Activated CD4-positive, alpha-beta T cell treated with anti-CD3 and anti-CD28 coated beads for 36 hours (primary cell): ENCODE measurements at regions of chr1 and their contacts with region 1.

Region 1: DNA sequence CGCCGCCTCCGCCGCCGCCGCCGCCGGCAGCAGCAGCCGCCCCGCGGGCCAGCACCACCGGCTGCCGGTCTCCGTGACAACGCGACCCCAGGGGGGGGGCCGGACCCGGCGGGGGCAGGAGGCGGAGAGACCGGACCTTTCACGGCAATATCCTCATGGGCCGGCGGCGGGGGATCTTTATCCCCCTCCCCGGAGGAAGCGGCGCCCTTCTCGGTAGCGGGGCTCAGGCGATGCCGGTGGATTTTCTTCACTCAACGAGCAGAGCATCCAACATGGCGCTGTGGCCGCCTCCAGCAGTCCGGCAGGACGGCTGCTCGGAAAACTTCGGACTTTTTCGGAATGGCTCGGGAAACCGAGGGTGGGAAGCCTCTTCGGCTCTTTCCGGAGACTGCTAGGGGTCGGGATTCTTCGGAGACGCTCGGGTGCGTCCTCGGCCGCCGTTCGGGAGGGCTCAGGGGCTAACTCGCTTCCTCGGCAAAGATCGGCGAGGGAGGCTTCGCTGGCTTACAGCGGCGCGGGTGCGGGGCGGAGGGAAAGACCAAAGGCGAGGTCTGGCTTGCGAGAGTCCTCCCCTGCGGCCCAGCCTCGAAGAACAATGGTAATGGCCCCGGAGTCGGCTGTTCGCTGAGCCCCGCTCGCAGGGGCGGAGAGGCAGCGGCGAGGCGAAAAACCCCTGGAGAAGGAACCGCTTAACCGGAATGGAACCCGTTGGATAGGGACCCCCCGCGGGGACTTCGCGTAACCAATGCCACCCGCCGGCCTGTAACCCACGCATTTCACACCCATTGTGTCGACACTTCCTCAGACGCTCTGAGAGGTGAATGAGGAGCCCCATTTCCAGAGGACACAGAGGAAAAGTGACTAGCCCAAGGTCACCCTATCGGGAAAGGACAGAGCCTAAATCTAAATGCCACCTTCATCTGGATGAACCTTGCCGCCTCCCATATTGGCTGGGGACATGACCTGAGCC is at the start of gene EIF4G3:
- DNase-seq: peak; percentile 100
- ATAC-seq: peak; percentile 99
- H3K4me3 Mint-ChIP-seq: peak within 1 kb of the TSS; percentile 81
- H3K27ac Mint-ChIP-seq: peak within 1 kb of the TSS; percentile 92
- H3K4me1 Mint-ChIP-seq: peaks cover 25% of the 10 kb centered on the region
- H3K27me3 Mint-ChIP-seq: no peaks in the 10 kb centered on the region
- total RNA-seq, gene EIF4G3: 47.0 to 55.0 TPM

Region 2: GRCh38 chr1:20507564-20508410 is 669.1 kb before region 1 on chr1 and contains the start of gene MUL1:
- CTCF ChIA-PET with region 1: no interaction called
- POLR2A ChIA-PET with region 1: no interaction called
- intact Hi-C with region 1: loop called in 1 of 2 experiments (anchors 2 kb)
- DNase-seq: peak; percentile 96
- ATAC-seq: peak; percentile 96
- H3K4me3 Mint-ChIP-seq: peak within 1 kb of the TSS; percentile 79
- H3K27ac Mint-ChIP-seq: peak within 1 kb of the TSS; percentile 65
- H3K4me1 Mint-ChIP-seq: peaks cover 17% of the 10 kb centered on the region
- H3K27me3 Mint-ChIP-seq: peaks cover 2% of the 10 kb centered on the region
- total RNA-seq, gene MUL1: 9.0 to 13.1 TPM

Region 3: DNA sequence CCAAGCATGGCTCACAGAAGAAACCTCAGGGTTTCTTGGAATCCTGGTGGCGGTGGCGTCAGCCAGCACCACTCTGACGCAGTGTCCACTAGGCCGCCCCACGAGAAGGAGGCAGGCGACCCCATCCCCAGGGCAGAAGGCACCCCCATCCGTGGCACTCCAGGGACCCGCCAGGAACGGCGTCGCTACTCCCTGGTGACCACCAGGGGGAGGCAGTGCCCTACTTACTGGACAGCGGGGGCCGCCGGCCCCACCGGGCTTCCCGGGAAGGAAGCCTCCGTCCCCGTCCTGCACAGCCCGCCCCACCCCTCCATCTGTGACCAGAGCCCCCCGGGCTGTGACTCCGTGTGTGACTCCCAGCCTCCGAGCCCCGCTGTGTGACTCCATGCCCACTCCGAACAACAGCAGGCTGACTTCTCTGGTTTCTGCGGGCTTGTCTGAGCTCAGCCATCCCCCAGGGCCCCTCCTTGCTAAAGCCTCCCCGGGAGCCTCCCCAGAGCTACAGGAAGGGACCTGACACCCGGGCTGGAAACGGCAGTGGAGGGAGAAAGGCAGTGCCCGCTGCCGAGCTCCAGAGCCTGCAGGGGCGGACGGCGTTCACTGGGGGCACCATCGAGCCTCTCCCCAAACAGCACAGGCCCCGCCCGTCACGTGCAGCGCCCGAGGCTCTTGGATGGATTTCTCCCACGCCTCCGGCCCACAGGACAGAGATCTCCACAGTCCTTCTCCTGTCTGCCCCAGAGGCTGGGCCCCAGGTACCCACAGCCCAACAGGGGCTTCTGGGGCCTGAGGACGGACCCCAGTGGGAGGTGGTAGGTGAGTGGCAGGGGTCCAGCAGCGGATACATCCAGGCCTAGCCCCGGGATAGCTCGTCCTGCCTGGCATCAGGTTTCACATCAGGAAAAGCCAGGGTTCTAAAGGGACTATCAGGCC is 480.2 kb before region 1 on chr1:
- CTCF ChIA-PET with region 1: interaction called, 3 read pairs
- POLR2A ChIA-PET with region 1: no interaction called
- intact Hi-C with region 1: loop called in 1 of 2 experiments (anchors 5 kb)
- DNase-seq: peak; percentile 89
- ATAC-seq: peak; percentile 98
- H3K4me3 Mint-ChIP-seq: peak overlapping the region; percentile 78
- H3K27ac Mint-ChIP-seq: peak overlapping the region; percentile 65
- H3K4me1 Mint-ChIP-seq: peaks cover 2% of the 10 kb centered on the region
- H3K27me3 Mint-ChIP-seq: no peaks in the 10 kb centered on the region

Region 4: GRCh38 chr1:20932437-20932977 is 244.4 kb before region 1 on chr1:
- CTCF ChIA-PET with region 1: no interaction called
- POLR2A ChIA-PET with region 1: no interaction called
- intact Hi-C with region 1: loop called (anchors 1 to 10 kb)
- DNase-seq: peak; percentile 65
- ATAC-seq: peak; percentile 84
- H3K4me3 Mint-ChIP-seq: peak overlapping the region; percentile 13
- H3K27ac Mint-ChIP-seq: peak overlapping the region; percentile 91
- H3K4me1 Mint-ChIP-seq: peaks cover 37% of the 10 kb centered on the region
- H3K27me3 Mint-ChIP-seq: no peaks in the 10 kb centered on the region

Region 5: GRCh38 chr1:21022279-21023040 is 154.4 kb before region 1 on chr1:
- CTCF ChIA-PET with region 1: no interaction called
- POLR2A ChIA-PET with region 1: no interaction called
- intact Hi-C with region 1: loop called in 1 of 2 experiments (anchors 5 kb)
- DNase-seq: peak; percentile 57
- ATAC-seq: peak; percentile 99
- H3K4me3 Mint-ChIP-seq: peak overlapping the region; percentile 15
- H3K27ac Mint-ChIP-seq: peak overlapping the region; percentile 88
- H3K4me1 Mint-ChIP-seq: peaks cover 20% of the 10 kb centered on the region
- H3K27me3 Mint-ChIP-seq: no peaks in the 10 kb centered on the region

Region 6: GRCh38 chr1:21344750-21345443 is 168.0 kb after region 1 on chr1:
- CTCF ChIA-PET with region 1: no interaction called
- POLR2A ChIA-PET with region 1: no interaction called
- intact Hi-C with region 1: loop called in 1 of 2 experiments (anchors 2 kb)
- DNase-seq: peak; percentile 44
- ATAC-seq: peak; percentile 17
- H3K4me3 Mint-ChIP-seq: no peak overlapping the region
- H3K27ac Mint-ChIP-seq: peak overlapping the region; percentile 95
- H3K4me1 Mint-ChIP-seq: peaks cover 39% of the 10 kb centered on the region
- H3K27me3 Mint-ChIP-seq: no peaks in the 10 kb centered on the region

Region 7: GRCh38 chr1:21782868-21783678 is 606.2 kb after region 1 on chr1 and contains the start of gene USP48:
- CTCF ChIA-PET with region 1: no interaction called
- POLR2A ChIA-PET with region 1: no interaction called
- intact Hi-C with region 1: loop called in 1 of 2 experiments (anchors 2 kb)
- DNase-seq: peak; percentile 98
- ATAC-seq: peak; percentile 79
- H3K4me3 Mint-ChIP-seq: peak within 1 kb of the TSS; percentile 87
- H3K27ac Mint-ChIP-seq: peak within 1 kb of the TSS; percentile 100
- H3K4me1 Mint-ChIP-seq: peaks cover 21% of the 10 kb centered on the region
- H3K27me3 Mint-ChIP-seq: no peaks in the 10 kb centered on the region
- total RNA-seq, gene USP48: 66.9 to 81.5 TPM

Region 8: GRCh38 chr1:21814241-21814918 is 637.5 kb after region 1 on chr1:
- CTCF ChIA-PET with region 1: no interaction called
- POLR2A ChIA-PET with region 1: no interaction called
- intact Hi-C with region 1: no loop called
- DNase-seq: peak; percentile 56
- ATAC-seq: peak; percentile 75
- H3K4me3 Mint-ChIP-seq: peak overlapping the region; percentile 51
- H3K27ac Mint-ChIP-seq: no peak overlapping the region
- H3K4me1 Mint-ChIP-seq: peaks cover 6% of the 10 kb centered on the region
- H3K27me3 Mint-ChIP-seq: peaks cover 20% of the 10 kb centered on the region